ENCODE measurements at regions of chr1 and their contacts with region 1.

Region 1: DNA sequence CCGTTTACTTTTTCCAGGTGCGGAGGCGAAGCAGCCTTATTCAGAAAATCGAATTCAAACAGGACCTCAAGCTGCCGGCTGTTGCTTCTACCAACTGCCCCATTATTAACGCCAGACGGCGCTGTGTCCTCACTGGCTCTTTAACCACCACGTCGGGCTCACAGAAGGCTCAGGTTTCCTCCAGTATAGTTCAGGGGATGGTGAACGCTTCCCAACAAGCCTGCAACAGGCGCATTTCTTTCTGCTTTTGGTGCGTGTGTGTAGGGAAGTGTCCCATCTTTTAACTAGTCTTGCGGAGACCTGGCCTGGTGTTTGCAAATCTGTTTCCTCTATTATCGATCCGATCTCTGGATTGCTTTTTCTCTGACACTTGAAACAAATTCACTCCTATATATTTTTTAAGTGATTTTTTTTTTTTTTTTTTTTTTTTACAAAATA is 791 bp upstream of the STUM start:
- DNase-seq: no peak
- H3K4me3 ChIP-seq: peak overlapping the region; percentile 63 to 76 (median 70)
- H3K27ac ChIP-seq: peak overlapping the region; percentile 68 to 89 (median 84)
- H3K4me1 ChIP-seq: peaks cover 28 to 48% (median 43%) of the 10 kb centered on the region in 4 donors
- H3K27me3 ChIP-seq: peaks cover 0 to 13% (median 0%) of the 10 kb centered on the region in 4 donors
- CTCF ChIP-seq: peak in 2 of 3 experiments; percentile 91 to 97
- EP300 ChIP-seq: no peak
- POLR2A ChIP-seq: no peak

Region 2: GRCh38 chr1:225242623-225243022 is 1305.2 kb before region 1 on chr1:
- intact Hi-C with region 1: no loop called
- DNase-seq: no peak
- H3K4me3 ChIP-seq: no peak overlapping the region
- H3K27ac ChIP-seq: no peak overlapping the region
- H3K4me1 ChIP-seq: no peaks in the 10 kb centered on the region
- H3K27me3 ChIP-seq: no peaks in the 10 kb centered on the region
- CTCF ChIP-seq: no peak
- EP300 ChIP-seq: no peak
- POLR2A ChIP-seq: no peak

Region 3: DNA sequence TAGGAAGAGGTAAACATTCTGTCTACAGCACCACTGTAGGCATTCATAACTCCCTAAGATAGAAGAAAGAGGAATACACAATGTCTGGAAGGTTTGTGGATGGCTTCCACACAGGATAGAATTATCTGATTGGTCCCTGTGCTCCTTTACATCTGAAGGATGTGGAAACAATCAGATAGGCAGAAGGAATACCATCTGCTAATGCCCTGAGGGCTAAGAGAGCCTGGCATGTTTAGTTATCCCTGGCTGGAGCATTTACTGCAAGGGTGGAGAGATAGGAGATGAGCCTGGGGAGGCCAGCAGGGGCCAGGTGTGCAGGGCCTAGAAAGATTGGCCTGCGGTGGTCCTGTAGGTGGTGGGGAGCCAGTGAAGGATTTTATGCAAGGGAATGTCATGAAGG is 352.6 kb before region 1 on chr1:
- intact Hi-C with region 1: no loop called
- DNase-seq: no peak
- H3K4me3 ChIP-seq: no peak overlapping the region
- H3K27ac ChIP-seq: no peak overlapping the region
- H3K4me1 ChIP-seq: no peaks in the 10 kb centered on the region
- H3K27me3 ChIP-seq: no peaks in the 10 kb centered on the region
- CTCF ChIP-seq: no peak
- EP300 ChIP-seq: no peak
- POLR2A ChIP-seq: no peak

Region 4: DNA sequence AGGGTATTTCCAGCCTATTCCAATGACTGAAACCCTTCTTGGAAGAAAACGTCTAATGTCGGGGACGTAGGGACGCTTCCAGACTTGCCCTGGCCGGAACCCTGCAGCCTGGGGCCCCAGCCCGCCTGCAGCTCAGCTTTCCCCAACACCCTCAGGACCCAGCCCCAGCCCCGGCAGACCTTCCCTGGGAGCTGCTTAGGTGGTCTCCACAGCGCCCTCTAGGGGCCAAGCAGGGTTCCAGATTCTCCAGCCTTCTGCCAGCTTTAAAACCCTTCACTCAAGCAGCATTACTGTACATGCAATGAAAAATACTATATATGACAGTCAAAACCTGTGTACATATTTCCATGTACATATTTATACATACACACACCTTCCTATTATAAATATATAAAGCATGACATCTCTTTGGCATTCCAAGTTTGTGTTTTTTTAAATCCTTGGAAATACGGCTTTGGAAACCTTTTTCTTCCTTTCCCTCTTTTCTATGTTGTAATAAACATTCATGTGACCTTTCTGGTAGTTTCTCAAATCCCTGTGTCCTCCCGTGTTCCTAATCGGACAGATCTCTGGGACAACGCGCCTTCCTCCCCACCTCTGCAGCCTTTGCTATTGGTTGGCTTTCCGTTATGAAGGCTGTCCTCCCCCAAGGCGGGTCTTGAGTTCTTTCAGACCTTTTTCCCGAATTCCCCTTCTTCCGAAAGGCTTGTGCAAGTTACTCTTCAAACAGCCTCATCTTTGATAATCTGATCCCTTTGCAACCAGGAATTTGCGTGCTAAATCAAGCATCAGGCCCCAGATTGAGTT is 61.1 kb after region 1 on chr1:
- intact Hi-C with region 1: loop called (anchors 1 kb)
- DNase-seq: no peak
- H3K4me3 ChIP-seq: no peak overlapping the region
- H3K27ac ChIP-seq: no peak overlapping the region
- H3K4me1 ChIP-seq: peaks cover 15 to 34% (median 30%) of the 10 kb centered on the region in 4 donors
- H3K27me3 ChIP-seq: no peaks in the 10 kb centered on the region
- CTCF ChIP-seq: peak; percentile 76 to 90 (median 82)
- EP300 ChIP-seq: no peak
- POLR2A ChIP-seq: no peak

Region 5: DNA sequence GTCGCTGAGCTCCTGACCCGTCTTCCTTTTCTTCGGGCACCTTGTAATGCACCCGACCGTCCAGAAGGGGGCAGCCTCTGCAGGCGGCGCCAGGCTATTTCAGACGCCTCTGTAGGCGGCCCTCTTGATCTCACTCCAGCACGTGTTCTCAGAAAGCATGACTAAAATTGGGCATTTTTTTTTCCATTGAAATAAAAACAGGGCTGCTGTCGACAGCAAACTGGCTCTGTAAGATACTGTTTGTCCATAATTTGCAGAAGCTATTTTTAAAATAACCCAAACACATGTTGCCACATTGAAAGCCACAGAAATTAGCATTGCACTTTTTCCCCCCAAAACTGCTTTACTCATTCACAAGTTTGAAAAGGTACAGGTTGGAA is 78.8 kb after region 1 on chr1:
- intact Hi-C with region 1: loop called (anchors 5 kb)
- DNase-seq: peak; percentile 96
- H3K4me3 ChIP-seq: peak overlapping the region in 1 of 4 donors; percentile 32
- H3K27ac ChIP-seq: peak overlapping the region in 2 of 4 donors; percentile 55 to 66
- H3K4me1 ChIP-seq: peaks cover 10 to 39% (median 34%) of the 10 kb centered on the region in 4 donors
- H3K27me3 ChIP-seq: no peaks in the 10 kb centered on the region
- CTCF ChIP-seq: peak in 2 of 3 experiments; percentile 95 to 99
- EP300 ChIP-seq: no peak
- POLR2A ChIP-seq: no peak

Region 6: GRCh38 chr1:226827968-226828513 is 280.3 kb after region 1 on chr1:
- intact Hi-C with region 1: loop called (anchors 5 kb)
- DNase-seq: peak; percentile 97
- H3K4me3 ChIP-seq: peak overlapping the region; percentile 25 to 35 (median 32)
- H3K27ac ChIP-seq: peak overlapping the region; percentile 84 to 90 (median 87)
- H3K4me1 ChIP-seq: peaks cover 17 to 22% (median 20%) of the 10 kb centered on the region in 4 donors
- H3K27me3 ChIP-seq: no peaks in the 10 kb centered on the region
- CTCF ChIP-seq: peak; percentile 97 to 98 (median 97)
- EP300 ChIP-seq: no peak
- POLR2A ChIP-seq: no peak